ENCODE measurements at regions of chr10 and their contacts with region 1.

Region 1: DNA sequence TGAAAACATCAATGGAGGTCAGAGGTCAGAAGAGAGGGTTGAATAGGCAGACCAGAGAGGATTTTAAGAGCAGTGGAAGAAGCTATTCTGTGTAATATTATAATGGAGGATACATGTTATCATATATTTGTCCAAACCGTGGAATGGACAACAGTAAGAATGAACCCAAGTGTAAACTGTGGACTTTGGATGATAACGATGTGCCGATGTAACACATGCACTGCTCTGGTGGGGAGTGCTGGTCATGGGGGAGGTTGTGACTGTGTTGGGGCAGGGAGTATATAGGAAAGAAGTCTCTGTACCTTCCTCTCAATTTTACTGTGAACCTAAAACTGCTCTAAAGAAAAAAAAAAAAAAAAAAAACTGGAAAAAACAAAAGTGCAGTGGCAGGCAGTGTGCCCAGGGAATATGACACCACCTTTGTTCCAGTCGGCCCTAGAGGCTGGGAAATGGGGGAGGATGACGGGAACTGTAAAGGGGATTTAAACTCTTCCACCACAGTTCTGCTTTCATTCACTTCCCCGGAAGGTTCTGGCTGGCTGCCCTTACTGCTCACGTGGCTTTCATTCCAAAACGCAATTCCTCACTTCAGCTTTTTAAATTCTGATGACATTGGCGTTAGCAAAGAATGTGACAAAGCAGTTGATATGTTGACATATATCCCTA is 113.7 kb upstream of the ANKRD1 start:
- DNase-seq: no peak
- H3K4me3 ChIP-seq: no peak overlapping the region
- H3K27ac ChIP-seq: no peak overlapping the region
- H3K4me1 ChIP-seq: peaks cover 10 to 21% (median 12%) of the 10 kb centered on the region in 4 donors
- H3K27me3 ChIP-seq: no peaks in the 10 kb centered on the region
- CTCF ChIP-seq: no peak
- EP300 ChIP-seq: no peak
- POLR2A ChIP-seq: no peak

Region 2: DNA sequence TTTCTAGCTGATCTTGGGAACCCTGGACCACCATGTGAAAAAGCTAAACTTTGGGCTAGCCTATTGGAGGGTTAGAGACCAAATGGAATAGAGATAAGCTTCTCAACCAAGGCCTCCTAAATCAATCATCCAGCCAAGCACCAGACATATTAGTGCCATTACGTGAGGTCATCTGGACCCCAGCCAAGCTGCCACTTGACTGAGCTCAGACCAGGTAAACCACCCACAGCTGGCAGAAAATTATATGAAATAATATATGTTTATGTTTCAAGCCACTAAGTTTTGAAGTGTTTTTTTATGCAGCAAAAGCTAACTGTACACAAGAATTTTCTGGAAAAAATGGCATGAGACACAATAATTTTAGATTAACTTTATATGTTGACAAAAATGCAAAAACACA is 103.2 kb after region 1 on chr10:
- intact Hi-C with region 1: loop called (anchors 5 kb)
- DNase-seq: no peak
- H3K4me3 ChIP-seq: no peak overlapping the region
- H3K27ac ChIP-seq: no peak overlapping the region
- H3K4me1 ChIP-seq: no peaks in the 10 kb centered on the region
- H3K27me3 ChIP-seq: no peaks in the 10 kb centered on the region
- CTCF ChIP-seq: no peak
- EP300 ChIP-seq: no peak
- POLR2A ChIP-seq: no peak

Measured in esophagus muscularis mucosa (tissue), 4 donors.